Thyroid gland (tissue), 4 donors: ENCODE measurements at regions of chr11 and their contacts with region 1.

Region 1: DNA sequence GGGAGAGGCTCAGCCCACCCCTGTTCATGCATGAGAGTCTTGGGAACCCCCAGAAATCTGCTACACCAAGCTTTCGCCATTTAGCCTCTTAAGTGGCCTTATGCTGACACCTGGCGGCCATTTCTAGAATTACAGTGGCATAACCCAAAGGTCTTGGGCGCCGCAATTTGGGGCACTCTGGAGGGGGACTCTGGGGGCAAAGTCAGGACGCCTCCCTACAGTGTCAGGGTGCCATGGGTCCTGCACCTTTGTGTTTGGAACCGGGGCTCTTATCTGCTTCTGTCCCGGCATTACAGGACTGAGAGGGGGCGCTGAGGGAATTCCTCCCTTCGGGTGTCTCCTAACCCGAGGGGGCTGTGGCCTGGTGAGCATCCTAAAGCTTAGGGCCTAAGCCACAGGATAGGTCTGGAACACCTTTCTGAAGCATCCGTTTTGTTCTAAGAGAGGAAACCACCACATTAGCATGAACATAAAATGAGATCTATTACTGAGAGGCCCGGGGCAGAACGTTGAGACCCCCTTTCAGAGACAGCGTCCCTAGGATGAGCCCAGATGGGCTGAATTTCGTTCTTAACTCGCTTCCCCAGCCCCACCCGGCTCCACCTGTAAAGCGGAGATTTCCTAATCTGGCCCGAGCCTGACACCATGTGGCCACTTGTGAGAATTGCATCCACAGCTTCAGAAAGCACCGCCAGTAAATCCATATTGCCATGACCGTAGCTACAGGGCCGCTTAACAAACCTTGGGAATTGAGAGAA is 9.3 kb downstream of the INS start:
- DNase-seq: peak; percentile 79 to 84
- H3K4me3 ChIP-seq: no peak overlapping the region
- H3K27ac ChIP-seq: no peak overlapping the region
- H3K4me1 ChIP-seq: peaks cover 0 to 5% of the 10 kb centered on the region in 2 donors
- H3K27me3 ChIP-seq: peaks cover 5% of the 10 kb centered on the region
- CTCF ChIP-seq: peak; percentile 72 to 87 (median 85)
- POLR2A ChIP-seq: no peak

Region 2: GRCh38 chr11:1694064-1694845 is 457.4 kb before region 1 on chr11:
- intact Hi-C with region 1: loop called (anchors 5 kb)
- DNase-seq: peak; percentile 77 to 80
- H3K4me3 ChIP-seq: peak overlapping the region in 1 of 3 donors; percentile 37
- H3K27ac ChIP-seq: peak overlapping the region in 1 of 3 donors; percentile 27
- H3K4me1 ChIP-seq: peaks cover 9 to 13% of the 10 kb centered on the region in 2 donors
- H3K27me3 ChIP-seq: no peaks in the 10 kb centered on the region
- CTCF ChIP-seq: peak; percentile 62 to 93 (median 88)
- POLR2A ChIP-seq: no peak

Region 3: DNA sequence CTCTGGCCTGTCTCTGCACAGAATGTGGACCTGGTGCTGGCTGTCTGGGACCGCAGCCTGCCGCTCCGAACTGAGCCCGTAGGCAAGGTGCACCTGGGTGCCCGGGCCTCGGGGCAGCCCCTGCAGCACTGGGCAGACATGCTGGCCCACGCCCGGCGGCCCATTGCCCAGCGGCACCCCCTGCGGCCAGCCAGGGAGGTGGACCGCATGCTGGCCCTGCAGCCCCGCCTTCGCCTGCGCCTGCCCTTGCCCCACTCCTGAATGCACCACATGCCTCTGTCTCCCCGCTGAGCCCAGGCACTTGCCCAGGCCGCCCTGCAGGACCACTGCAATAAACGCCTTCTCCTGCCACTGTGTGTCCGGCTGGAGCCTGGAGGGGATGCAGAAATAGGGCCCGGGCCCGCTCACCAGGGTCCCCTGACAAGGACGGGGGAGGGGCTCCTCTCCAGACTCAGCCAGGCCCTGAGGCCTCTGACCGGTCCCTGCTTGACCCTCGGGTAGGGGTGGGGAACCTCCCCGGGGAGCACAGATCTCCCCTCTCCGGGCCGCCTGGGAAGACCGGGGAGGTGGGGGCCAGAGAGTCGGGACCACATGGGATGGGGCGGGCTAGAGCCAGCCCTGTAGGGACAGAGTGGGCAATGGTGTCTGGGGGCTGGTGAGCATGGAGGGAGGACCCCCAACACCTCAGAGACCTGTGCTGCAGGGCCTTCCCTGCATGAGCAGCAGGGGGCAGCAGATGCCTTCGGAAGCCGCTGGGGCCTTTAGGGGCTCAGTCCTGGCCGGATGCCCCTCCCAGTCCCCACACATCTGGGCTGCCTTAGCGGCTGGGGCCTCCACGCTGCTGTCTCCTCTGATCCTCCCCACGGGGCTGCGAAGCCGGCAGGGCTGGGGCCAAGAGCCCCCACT is 314.3 kb before region 1 on chr11:
- intact Hi-C with region 1: loop called (anchors 10 kb)
- DNase-seq: peak; percentile 36 to 44
- H3K4me3 ChIP-seq: no peak overlapping the region
- H3K27ac ChIP-seq: no peak overlapping the region
- H3K4me1 ChIP-seq: peaks cover 0 to 15% of the 10 kb centered on the region in 2 donors
- H3K27me3 ChIP-seq: no peaks in the 10 kb centered on the region
- CTCF ChIP-seq: peak; percentile 41 to 72 (median 64)
- POLR2A ChIP-seq: no peak

Region 4: DNA sequence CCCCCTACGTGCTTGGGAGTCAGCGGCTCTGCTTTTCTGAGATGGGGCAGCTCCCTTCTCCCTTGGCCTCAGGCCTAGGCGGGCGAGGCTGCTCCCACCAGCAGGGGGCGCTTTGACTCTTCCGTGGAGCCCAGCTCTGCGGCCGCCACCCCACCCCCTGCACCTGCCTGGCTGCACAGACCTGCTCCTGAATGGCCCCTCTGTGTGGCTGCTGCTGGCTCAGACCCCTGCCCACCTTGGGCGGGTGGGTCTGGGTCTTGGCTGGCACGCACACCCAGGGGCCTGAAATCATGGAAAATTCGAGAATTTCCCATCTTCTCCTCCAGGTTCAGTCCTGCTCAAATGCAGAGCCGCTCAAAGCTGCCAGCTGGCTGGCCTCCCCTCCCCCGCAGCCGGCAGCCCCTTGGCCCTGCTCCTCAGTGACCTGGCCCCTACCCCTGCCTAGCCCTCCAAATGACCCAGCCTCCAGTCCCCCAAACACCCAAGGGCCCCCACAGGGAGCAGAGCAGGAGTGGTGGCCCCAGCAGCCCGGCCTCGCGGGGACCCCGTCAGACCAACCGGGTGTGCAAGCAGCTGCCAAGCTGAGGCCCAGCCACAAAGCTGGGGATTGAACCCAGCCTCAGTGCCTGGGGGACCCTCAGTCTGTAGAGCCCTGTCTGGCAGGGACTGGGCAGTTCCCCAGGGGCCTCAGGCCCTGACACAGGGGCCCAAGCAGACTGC is 269.0 kb before region 1 on chr11:
- intact Hi-C with region 1: loop called (anchors 5 kb)
- DNase-seq: peak; percentile 63 to 65
- H3K4me3 ChIP-seq: no peak overlapping the region
- H3K27ac ChIP-seq: peak overlapping the region in 1 of 3 donors; percentile 37
- H3K4me1 ChIP-seq: peaks cover 5 to 22% of the 10 kb centered on the region in 2 donors
- H3K27me3 ChIP-seq: no peaks in the 10 kb centered on the region
- CTCF ChIP-seq: peak; percentile 56 to 90 (median 64)
- POLR2A ChIP-seq: no peak